Calu3 (cell line): ENCODE measurements at regions of chr22 and their contacts with region 1.

Region 1: GRCh38 chr22:23700699-23701098 is 9.9 kb downstream of the RGL4 start:
- DNase-seq: no peak
- H3K4me3 Mint-ChIP-seq: no peak overlapping the region
- H3K27ac Mint-ChIP-seq: no peak overlapping the region
- H3K4me1 Mint-ChIP-seq: no peaks in the 10 kb centered on the region
- H3K27me3 Mint-ChIP-seq: no peaks in the 10 kb centered on the region
- CTCF ChIP-seq: no peak

Region 2: GRCh38 chr22:23675492-23676415 is 24.9 kb before region 1 on chr22:
- CTCF ChIA-PET with region 1: no interaction called
- intact Hi-C with region 1: loop called (anchors 1 kb)
- DNase-seq: peak; percentile 57
- H3K4me3 Mint-ChIP-seq: no peak overlapping the region
- H3K27ac Mint-ChIP-seq: no peak overlapping the region
- H3K4me1 Mint-ChIP-seq: peaks cover 39% of the 10 kb centered on the region
- H3K27me3 Mint-ChIP-seq: no peaks in the 10 kb centered on the region
- CTCF ChIP-seq: no peak

Region 3: DNA sequence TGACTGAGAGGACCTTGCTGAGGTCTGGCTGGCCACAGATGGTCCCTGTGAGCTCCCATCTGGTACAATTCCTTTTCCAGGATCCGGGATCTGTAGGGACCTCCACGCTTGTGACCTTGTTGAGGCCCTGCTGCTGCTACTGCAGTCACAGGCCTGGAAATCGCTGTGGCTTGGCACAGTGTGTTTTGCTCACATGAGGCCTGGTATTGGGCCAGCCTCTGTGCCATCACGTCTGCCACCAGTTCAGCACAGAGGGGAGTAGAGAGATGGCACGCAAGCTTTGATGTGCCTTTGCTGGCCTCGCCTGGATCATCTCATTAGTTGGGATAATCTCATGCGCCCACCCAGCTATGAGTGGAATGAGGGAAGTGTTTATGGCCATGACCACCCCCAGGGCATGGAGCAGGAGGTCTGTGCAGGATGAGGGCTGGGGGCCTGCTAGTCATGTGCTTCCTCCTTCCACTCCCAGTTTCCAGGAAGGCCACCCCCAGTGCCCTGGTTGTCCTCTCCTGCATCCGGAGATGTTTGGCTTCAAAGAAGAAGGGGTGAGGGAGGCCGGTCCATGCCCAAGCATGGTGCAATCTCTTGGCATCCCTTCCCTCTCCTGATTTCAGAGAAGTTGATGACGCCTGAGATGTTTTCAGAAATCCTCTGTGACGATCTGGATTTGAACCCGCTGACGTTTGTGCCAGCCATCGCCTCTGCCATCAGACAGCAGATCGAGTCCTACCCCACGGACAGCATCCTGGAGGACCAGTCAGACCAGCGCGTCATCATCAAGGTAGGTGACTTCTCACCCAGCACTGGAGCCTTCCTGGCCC is 115.7 kb after region 1 on chr22:
- CTCF ChIA-PET with region 1: no interaction called
- intact Hi-C with region 1: no loop called
- DNase-seq: no peak
- H3K4me3 Mint-ChIP-seq: no peak overlapping the region
- H3K27ac Mint-ChIP-seq: no peak overlapping the region
- H3K4me1 Mint-ChIP-seq: no peaks in the 10 kb centered on the region
- H3K27me3 Mint-ChIP-seq: no peaks in the 10 kb centered on the region
- CTCF ChIP-seq: no peak